ENCODE measurements at regions of chr5 and their contacts with region 1.

Region 1: GRCh38 chr5:149960272-149961185 is at the start of gene SLC26A2:
- DNase-seq: peak; percentile 98
- ATAC-seq: peak; percentile 100
- total RNA-seq, gene SLC26A2: 6.3 to 12.6 TPM

Region 2: DNA sequence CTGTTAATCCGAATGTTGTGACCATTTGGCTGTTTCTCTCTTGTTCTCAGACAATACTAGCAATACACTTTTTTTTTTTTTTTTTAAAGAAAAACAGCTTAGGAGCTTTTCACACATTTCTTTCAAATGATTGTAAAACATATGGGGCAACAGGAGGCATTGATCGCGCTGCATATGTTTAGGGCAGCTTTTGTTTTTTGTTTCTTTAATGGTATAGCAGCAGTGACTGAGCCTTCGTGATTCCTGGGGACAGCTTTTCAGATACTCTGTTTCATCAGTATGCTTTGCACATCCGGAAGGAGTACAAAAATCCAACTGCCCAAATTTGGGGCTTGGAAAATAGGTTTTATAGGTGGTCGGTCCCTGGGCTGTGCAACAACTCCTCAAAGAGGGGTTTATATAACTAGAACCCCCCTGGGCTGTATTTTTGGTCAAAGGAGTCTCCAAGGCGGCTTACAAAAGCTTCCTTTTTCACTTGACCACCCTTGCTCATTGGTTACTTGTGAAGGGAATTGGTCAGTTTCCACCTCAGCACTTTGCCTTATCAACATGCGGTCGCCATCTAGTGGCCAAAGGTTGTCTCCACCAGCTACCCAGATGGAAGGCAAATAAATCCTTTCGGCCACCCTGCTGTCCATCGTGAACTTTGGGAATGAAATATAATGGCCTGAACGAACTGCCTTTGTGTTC is 107.7 kb before region 1 on chr5:
- intact Hi-C with region 1: loop called in 1 of 2 experiments (anchors 2 kb)
- DNase-seq: peak; percentile 80
- ATAC-seq: peak; percentile 63 to 65